ENCODE measurements at regions of chr11 and their contacts with region 1.

Region 1: GRCh38 chr11:111601979-111602864 is at the start of gene SIK2:
- DNase-seq: peak; percentile 96
- H3K4me3 Mint-ChIP-seq: peak within 1 kb of the TSS; percentile 90
- H3K27ac Mint-ChIP-seq: peak within 1 kb of the TSS; percentile 90
- H3K4me1 Mint-ChIP-seq: peaks cover 26% of the 10 kb centered on the region
- H3K27me3 Mint-ChIP-seq: peaks cover 9% of the 10 kb centered on the region
- total RNA-seq, gene SIK2: 8.2 and 9.0 TPM in 2 replicates

Region 2: GRCh38 chr11:111526501-111526900 is 75.7 kb before region 1 on chr11:
- intact Hi-C with region 1: loop called (anchors 5 kb)
- DNase-seq: no peak
- H3K4me3 Mint-ChIP-seq: peak overlapping the region; percentile 30
- H3K27ac Mint-ChIP-seq: peak overlapping the region; percentile 59
- H3K4me1 Mint-ChIP-seq: peaks cover 40% of the 10 kb centered on the region
- H3K27me3 Mint-ChIP-seq: no peaks in the 10 kb centered on the region

Region 3: GRCh38 chr11:111777094-111778046 is 175.1 kb after region 1 on chr11:
- intact Hi-C with region 1: loop called (anchors 1 kb)
- DNase-seq: peak; percentile 77
- H3K4me3 Mint-ChIP-seq: no peak overlapping the region
- H3K27ac Mint-ChIP-seq: no peak overlapping the region
- H3K4me1 Mint-ChIP-seq: no peaks in the 10 kb centered on the region
- H3K27me3 Mint-ChIP-seq: no peaks in the 10 kb centered on the region

Region 4: DNA sequence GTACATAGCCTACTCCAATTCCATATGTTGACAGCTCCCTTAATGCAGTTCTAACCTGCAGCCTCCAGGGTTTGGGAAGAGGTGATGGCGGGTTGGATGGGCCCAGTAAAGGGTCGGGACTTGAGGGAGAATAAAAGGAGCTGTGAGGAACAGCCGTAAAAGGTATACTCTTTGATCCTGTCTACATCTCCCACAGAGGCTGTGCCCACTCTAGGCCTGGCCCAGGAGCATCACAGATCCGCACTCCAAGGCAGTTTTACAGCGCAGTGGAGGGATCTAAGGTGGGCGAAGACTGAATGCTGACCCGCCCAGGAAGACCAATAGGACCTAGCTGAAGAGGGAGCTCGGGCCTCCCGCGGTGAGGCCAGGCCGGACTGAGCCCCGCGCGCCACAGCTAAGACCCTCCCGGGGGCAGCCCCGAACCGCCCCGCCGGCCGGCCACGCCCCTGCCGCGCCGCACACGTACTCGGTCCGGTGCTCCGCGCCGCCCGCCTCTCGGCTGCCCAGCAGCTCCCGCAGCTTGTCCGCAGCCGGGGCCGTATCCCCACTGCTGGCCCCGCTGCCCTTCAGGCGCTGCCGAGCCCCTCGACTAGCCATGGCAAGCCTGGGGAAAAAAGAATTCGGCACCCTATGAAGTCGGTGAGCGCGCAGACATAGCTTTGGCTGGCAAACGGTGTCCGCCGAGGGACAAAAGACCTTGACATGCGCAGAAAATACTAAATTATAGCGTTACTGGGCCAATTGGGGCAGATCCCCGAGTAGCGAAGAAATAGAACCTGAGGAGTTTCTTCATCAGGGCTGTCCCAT is 268.9 kb after region 1 on chr11 and contains the start of gene ALG9:
- intact Hi-C with region 1: loop called (anchors 2 kb)
- DNase-seq: peak; percentile 97
- H3K4me3 Mint-ChIP-seq: peak within 1 kb of the TSS; percentile 96
- H3K27ac Mint-ChIP-seq: peak within 1 kb of the TSS; percentile 90
- H3K4me1 Mint-ChIP-seq: peaks cover 11% of the 10 kb centered on the region
- H3K27me3 Mint-ChIP-seq: no peaks in the 10 kb centered on the region
- total RNA-seq, gene ALG9: 32.6 and 32.9 TPM in 2 replicates

Region 5: GRCh38 chr11:111932611-111932950 is 330.4 kb after region 1 on chr11:
- intact Hi-C with region 1: loop called (anchors 1 kb)
- DNase-seq: no peak
- H3K4me3 Mint-ChIP-seq: peak overlapping the region; percentile 57
- H3K27ac Mint-ChIP-seq: peak overlapping the region; percentile 84
- H3K4me1 Mint-ChIP-seq: peaks cover 30% of the 10 kb centered on the region
- H3K27me3 Mint-ChIP-seq: no peaks in the 10 kb centered on the region

Region 6: GRCh38 chr11:112074026-112074811 is 472.0 kb after region 1 on chr11 and contains the start of gene NKAPD1:
- intact Hi-C with region 1: loop called (anchors 5 kb)
- DNase-seq: peak; percentile 95
- H3K4me3 Mint-ChIP-seq: peak within 1 kb of the TSS; percentile 95
- H3K27ac Mint-ChIP-seq: peak within 1 kb of the TSS; percentile 96
- H3K4me1 Mint-ChIP-seq: peaks cover 29% of the 10 kb centered on the region
- H3K27me3 Mint-ChIP-seq: peaks cover 4% of the 10 kb centered on the region
- total RNA-seq, gene NKAPD1: 24.4 and 27.0 TPM in 2 replicates

Region 7: DNA sequence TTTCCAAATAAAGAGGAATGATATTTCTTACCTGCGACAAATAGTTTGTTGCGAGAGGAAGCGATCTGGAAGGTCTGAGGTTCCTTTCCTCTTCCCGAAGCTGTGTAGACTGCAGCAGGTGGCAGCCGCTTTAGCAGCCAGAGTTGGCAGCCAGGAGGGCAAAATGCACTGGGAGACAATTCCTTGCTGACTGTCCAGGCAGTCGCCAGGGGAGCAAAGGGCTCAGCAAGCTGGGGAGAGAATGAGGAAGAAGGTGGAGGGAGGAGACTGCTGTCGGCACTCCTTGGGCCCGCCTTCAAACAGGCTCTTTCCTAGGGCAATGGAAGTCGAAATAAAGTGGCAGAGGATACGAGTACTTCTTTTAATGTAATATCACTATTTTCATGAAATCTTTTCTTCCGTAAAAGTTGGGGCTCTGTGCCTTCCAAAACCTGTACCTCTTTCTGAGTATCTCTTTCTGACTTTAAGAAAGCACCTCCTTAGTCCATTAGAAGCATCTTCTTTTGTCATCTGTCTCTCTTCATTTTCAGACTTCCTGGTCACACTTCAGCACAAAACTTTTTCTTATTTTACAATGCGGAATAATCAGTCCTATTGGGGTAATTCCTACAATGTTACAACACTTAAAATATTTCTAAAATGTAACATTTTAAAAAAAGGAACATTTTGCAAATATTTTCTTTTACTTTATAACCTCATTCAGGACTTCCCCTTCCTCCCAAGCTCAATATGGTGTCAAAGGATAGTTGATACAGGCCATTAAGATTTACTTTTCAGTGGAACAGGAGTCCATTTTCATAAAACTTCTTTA is 561.9 kb after region 1 on chr11 and contains the start of gene IL18:
- intact Hi-C with region 1: no loop called
- DNase-seq: no peak
- H3K4me3 Mint-ChIP-seq: peak within 1 kb of the TSS; percentile 58
- H3K27ac Mint-ChIP-seq: no peak within 1 kb of the TSS
- H3K4me1 Mint-ChIP-seq: peaks cover 6% of the 10 kb centered on the region
- H3K27me3 Mint-ChIP-seq: peaks cover 36% of the 10 kb centered on the region
- total RNA-seq, gene IL18: 0.12 TPM in 1 of 2 replicates, not detected in the other